ENCODE measurements at regions of chr1 and their contacts with region 1.

Region 1: GRCh38 chr1:225441314-225442122 is 13.7 kb upstream of the LBR start:
- DNase-seq: no peak
- H3K4me3 Mint-ChIP-seq: peak overlapping the region; percentile 55
- H3K27ac Mint-ChIP-seq: peak overlapping the region; percentile 76
- H3K4me1 Mint-ChIP-seq: peaks cover 51% of the 10 kb centered on the region
- H3K27me3 Mint-ChIP-seq: peaks cover 2% of the 10 kb centered on the region

Region 2: GRCh38 chr1:225467193-225468020 is 25.9 kb after region 1 on chr1:
- intact Hi-C with region 1: loop called (anchors 1 kb)
- DNase-seq: peak; percentile 80
- H3K4me3 Mint-ChIP-seq: peak overlapping the region; percentile 92
- H3K27ac Mint-ChIP-seq: peak overlapping the region; percentile 95
- H3K4me1 Mint-ChIP-seq: peaks cover 45% of the 10 kb centered on the region
- H3K27me3 Mint-ChIP-seq: no peaks in the 10 kb centered on the region

Region 3: GRCh38 chr1:225617479-225617878 is 176.0 kb after region 1 on chr1:
- intact Hi-C with region 1: no loop called
- DNase-seq: no peak
- H3K4me3 Mint-ChIP-seq: no peak overlapping the region
- H3K27ac Mint-ChIP-seq: no peak overlapping the region
- H3K4me1 Mint-ChIP-seq: no peaks in the 10 kb centered on the region
- H3K27me3 Mint-ChIP-seq: peaks cover 2% of the 10 kb centered on the region